ENCODE measurements at regions of chr6 and their contacts with region 1.

Region 1: GRCh38 chr6:56757588-56757984 is 114.9 kb upstream of the DST start:
- DNase-seq: no peak
- H3K4me3 ChIP-seq: no peak overlapping the region
- H3K27ac ChIP-seq: no peak overlapping the region
- H3K4me1 ChIP-seq: peaks cover 0 to 18% (median 12%) of the 10 kb centered on the region in 4 experiments; a peak in 6 of 7 replicates
- H3K27me3 ChIP-seq: no peaks in the 10 kb centered on the region
- CTCF ChIP-seq: peak in 2 of 3 experiments; percentile 49 to 61; a peak in 3 of 4 replicates
- EP300 ChIP-seq: no peak
- POLR2A ChIP-seq: no peak
- RAD21 ChIP-seq: peak; percentile 73 to 79

Region 2: DNA sequence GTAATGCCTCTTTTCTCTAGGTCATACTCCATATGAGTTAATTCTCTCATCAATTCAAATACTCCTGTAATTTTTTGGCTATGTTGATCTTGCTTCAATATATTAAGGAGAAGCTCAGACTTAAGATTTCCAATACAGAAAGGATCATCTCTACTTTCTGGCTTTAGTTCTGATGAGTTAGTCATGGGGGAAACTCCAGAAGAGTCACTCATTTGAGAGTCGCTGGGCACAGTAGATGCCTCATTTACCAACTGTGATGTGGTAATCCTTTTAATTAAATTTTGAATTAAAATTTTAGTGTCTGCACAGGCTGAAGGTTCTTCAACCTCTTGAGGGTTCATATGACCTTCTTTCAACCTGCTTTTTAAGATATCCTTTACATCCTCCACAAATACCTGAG is 153.4 kb before region 1 on chr6:
- CTCF ChIA-PET with region 1: no interaction called
- POLR2A ChIA-PET with region 1: no interaction called
- DNase-seq: no peak
- H3K4me3 ChIP-seq: no peak overlapping the region
- H3K27ac ChIP-seq: no peak overlapping the region
- H3K4me1 ChIP-seq: no peaks in the 10 kb centered on the region
- H3K27me3 ChIP-seq: no peaks in the 10 kb centered on the region
- CTCF ChIP-seq: no peak
- EP300 ChIP-seq: no peak
- POLR2A ChIP-seq: no peak
- RAD21 ChIP-seq: no peak

Region 3: DNA sequence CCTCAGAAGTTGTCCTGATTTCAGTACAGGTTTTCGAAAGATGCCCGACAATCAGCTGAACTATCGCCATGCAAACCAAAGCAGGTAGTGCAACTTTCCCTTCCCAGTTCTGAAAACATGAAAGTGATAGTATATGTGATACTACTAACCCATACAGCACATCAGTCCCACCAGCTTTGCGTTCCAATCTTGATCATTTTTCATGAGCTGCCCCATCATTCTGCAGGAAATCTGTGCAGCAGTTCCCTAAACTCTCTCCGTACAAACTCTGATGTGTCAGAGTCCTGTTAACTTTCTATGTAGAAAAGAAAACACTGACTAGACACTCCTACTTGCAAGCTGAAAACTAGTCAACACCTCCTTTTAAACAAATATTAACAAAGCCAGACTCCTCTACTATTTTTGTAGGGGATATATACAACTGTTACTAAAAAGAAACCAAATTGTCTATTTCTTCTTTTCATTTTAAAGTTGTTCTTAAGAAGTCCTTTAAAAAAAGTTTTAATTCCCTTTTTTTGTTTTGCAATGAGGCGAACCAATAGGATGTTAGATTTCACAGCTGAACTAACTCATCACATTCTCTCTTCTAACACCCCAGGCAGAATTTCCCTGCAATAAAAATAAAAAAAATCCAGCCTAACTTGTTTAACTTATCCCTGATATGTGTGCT is 15.3 kb before region 1 on chr6:
- CTCF ChIA-PET with region 1: interaction called, 31 read pairs
- POLR2A ChIA-PET with region 1: interaction called, 3 read pairs
- DNase-seq: no peak
- H3K4me3 ChIP-seq: no peak overlapping the region; a peak in 1 of 8 replicates
- H3K27ac ChIP-seq: no peak overlapping the region
- H3K4me1 ChIP-seq: peaks cover 3 to 25% (median 16%) of the 10 kb centered on the region in 4 experiments; a peak in 6 of 7 replicates
- H3K27me3 ChIP-seq: no peaks in the 10 kb centered on the region
- CTCF ChIP-seq: no peak
- EP300 ChIP-seq: no peak
- POLR2A ChIP-seq: no peak
- RAD21 ChIP-seq: no peak

Region 4: DNA sequence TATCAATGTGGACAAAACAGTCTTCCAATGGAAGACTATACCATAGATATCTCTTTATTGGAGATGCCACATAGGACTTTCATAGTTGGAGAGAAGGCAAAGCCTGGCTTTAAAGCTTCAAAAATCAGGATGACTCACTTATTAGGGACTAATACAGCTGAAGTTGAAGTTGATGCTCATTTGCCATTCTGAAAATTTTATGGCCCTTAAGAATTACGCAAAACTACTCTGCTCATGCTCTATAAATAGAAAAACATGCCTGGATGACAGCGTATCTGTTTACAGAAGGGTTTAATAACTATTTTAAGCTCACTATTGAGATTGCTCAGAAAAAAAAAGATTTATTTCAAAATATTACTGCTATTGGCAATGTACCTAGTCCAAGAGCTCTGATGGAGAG is 40.6 kb after region 1 on chr6:
- CTCF ChIA-PET with region 1: no interaction called
- POLR2A ChIA-PET with region 1: no interaction called
- DNase-seq: no peak
- H3K4me3 ChIP-seq: no peak overlapping the region
- H3K27ac ChIP-seq: no peak overlapping the region
- H3K4me1 ChIP-seq: peaks cover 4 to 26% (median 14%) of the 10 kb centered on the region in 4 experiments; a peak in 6 of 7 replicates
- H3K27me3 ChIP-seq: no peaks in the 10 kb centered on the region
- CTCF ChIP-seq: no peak
- EP300 ChIP-seq: no peak
- POLR2A ChIP-seq: no peak
- RAD21 ChIP-seq: no peak

Region 5: DNA sequence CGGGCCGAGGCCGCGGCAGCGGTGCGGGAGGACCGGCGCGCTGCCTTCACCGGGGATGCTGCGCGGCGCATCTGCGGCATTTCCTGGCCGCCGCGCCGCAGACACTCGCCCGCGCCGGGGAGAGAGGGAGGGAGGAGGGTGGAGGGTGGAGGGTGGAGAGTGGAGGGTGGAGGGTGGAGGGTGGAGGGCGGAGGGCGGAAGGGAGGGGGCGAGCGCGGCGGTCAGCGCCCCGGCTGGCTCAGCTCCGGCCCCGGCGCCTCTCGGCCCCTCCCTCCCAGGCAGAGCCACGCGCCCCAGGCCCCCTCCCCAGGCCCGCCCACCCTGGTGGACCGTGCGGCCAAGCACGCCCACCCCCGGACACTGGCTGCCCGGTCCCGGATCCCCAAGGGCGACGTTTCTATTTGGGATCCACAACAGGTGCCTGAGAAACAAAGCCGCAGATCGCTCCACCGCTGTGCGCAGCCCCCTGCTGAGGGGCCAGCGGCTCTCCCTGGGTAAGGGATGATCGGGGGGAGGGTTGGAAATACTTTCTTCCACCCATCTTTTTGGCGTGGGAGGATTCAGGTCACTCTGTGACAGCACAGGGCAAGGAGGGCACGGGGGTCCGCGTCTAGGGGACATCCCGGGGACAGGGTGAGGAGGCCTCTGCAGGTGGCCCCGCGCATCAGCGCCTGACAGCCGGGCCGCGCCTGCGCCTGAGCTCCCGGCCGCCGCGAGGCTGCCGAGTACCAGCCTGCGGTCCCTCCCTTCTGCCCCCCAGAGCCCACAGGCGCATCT is 86.2 kb after region 1 on chr6:
- CTCF ChIA-PET with region 1: interaction called, 28 read pairs
- POLR2A ChIA-PET with region 1: interaction called, 3 read pairs
- DNase-seq: peak; percentile 79 to 92
- H3K4me3 ChIP-seq: peak overlapping the region; percentile 91 to 98 (median 94)
- H3K27ac ChIP-seq: peak overlapping the region; percentile 59; the same call in 1 of the 2 replicates
- H3K4me1 ChIP-seq: peaks cover 0 to 12% (median 5%) of the 10 kb centered on the region in 4 experiments; a peak in 2 of 7 replicates
- H3K27me3 ChIP-seq: no peaks in the 10 kb centered on the region
- CTCF ChIP-seq: peak; percentile 66 to 73 (median 70)
- EP300 ChIP-seq: no peak
- POLR2A ChIP-seq: peak; percentile 35 to 69; a peak in 2 of 3 replicates
- RAD21 ChIP-seq: peak; percentile 63 to 68